ENCODE measurements at regions of chr1 and their contacts with region 1.

Region 1: DNA sequence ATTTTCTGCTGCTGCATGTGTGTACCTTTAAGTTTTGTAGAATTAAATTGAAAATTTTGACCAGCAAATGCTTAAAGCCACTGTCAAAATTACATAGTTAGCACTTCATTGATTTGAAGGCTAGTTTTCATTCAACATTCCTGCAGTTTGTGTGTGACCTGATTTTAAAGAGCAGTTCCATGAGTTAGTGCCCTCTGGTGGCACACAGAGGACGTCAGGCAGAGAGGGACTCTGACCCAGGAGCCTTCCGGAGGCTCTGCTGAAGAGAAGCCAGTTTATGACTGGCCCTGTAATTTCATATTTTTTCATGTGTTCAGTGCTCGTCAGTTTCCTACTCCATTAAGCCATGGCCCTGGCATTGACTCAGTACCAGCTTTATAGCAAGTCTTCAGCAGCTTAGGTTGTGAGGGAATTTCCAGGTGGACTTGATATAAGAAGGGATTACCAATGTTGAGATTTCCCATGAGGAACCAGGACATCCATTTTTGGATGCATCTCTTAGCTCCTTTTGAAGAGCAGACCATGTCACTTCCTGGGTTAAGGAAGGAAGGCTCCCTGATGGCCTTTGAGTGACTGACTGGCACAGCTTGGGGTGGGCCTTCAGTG is 104.7 kb downstream of the CAMTA1 start:
- DNase-seq: peak in 7 of 9 experiments; percentile 12 to 57 (median 37)
- ATAC-seq: no peak
- H3K4me3 ChIP-seq: no peak overlapping the region
- H3K4me3 Mint-ChIP-seq: no peak overlapping the region
- H3K27ac ChIP-seq: no peak overlapping the region
- H3K27ac Mint-ChIP-seq: no peak overlapping the region
- H3K4me1 ChIP-seq: no peaks in the 10 kb centered on the region
- H3K4me1 Mint-ChIP-seq: no peaks in the 10 kb centered on the region
- H3K27me3 ChIP-seq: no peaks in the 10 kb centered on the region
- H3K27me3 Mint-ChIP-seq: no peaks in the 10 kb centered on the region
- CTCF ChIP-seq: peak; percentile 43

Region 2: DNA sequence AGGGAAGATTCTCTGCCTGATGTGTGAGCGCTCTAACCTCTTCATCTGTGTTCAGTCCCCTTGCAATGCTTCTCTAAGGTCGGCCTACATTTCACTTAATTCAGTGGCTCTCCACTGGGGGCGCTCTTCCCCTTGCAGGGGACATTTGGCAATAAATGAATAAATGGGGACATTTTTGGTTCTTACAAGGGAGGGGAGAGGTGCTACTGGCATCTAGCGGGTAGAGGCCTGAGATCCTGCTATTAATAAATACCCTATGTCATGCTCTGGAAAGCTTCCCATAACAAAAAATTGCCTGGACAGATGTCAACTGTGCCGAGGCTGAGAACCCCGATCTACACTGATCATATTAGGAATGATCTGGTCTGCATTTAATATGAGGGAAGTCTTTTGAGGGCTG is 162.4 kb before region 1 on chr1:
- CTCF ChIA-PET with region 1: interaction called, 12 read pairs
- POLR2A ChIA-PET with region 1: no interaction called
- intact Hi-C with region 1: loop called (anchors 1 kb)
- DNase-seq: peak; percentile 17 to 69 (median 57)
- ATAC-seq: peak; percentile 40
- H3K4me3 ChIP-seq: no peak overlapping the region
- H3K4me3 Mint-ChIP-seq: no peak overlapping the region
- H3K27ac ChIP-seq: no peak overlapping the region
- H3K27ac Mint-ChIP-seq: no peak overlapping the region
- H3K4me1 ChIP-seq: no peaks in the 10 kb centered on the region
- H3K4me1 Mint-ChIP-seq: no peaks in the 10 kb centered on the region
- H3K27me3 ChIP-seq: no peaks in the 10 kb centered on the region
- H3K27me3 Mint-ChIP-seq: peaks cover 7% of the 10 kb centered on the region
- CTCF ChIP-seq: peak; percentile 84

Region 3: DNA sequence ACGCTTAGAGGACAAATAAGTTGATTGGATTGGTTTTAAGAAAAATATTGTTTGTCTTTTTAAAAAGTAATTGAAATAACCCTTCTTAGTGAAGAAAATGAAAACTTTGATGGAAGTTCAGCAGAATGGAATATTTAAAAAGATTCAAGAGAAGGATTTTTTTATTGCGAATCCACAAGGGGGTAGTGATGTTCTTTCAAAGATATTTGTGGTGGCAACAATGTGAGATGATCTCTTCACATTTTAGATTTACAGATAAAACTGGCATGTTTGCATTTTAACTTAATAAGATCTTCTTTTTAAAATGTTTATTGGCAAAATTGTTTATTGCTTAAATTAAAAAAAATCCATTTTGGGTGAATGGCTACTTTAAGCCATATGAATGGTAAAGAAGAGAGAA is 95.8 kb before region 1 on chr1:
- CTCF ChIA-PET with region 1: interaction called, 4 read pairs
- POLR2A ChIA-PET with region 1: no interaction called
- intact Hi-C with region 1: loop called (anchors 1 to 2 kb)
- DNase-seq: peak in 2 of 9 experiments; percentile 39 to 58
- ATAC-seq: no peak
- H3K4me3 ChIP-seq: no peak overlapping the region
- H3K4me3 Mint-ChIP-seq: no peak overlapping the region
- H3K27ac ChIP-seq: no peak overlapping the region
- H3K27ac Mint-ChIP-seq: no peak overlapping the region
- H3K4me1 ChIP-seq: no peaks in the 10 kb centered on the region
- H3K4me1 Mint-ChIP-seq: peaks cover 47% of the 10 kb centered on the region
- H3K27me3 ChIP-seq: no peaks in the 10 kb centered on the region
- H3K27me3 Mint-ChIP-seq: no peaks in the 10 kb centered on the region
- CTCF ChIP-seq: peak; percentile 45